Activated CD8-positive, alpha-beta T cell treated with anti-CD3 and anti-CD28 coated beads, Interleukin-2, amount 10 ng/mL, durations not matched to agents 7 days and 5 days (primary cell): ENCODE measurements at regions of chr6 and their contacts with region 1.

Region 1: GRCh38 chr6:63352587-63353285 is 33.0 kb upstream of the LGSN start:
- DNase-seq: peak; percentile 58
- ATAC-seq: peak; percentile 77
- H3K4me3 Mint-ChIP-seq: peak overlapping the region; percentile 50
- H3K27ac Mint-ChIP-seq: peak overlapping the region; percentile 77
- H3K4me1 Mint-ChIP-seq: peaks cover 24% of the 10 kb centered on the region
- H3K27me3 Mint-ChIP-seq: peaks cover 11% of the 10 kb centered on the region

Region 2: DNA sequence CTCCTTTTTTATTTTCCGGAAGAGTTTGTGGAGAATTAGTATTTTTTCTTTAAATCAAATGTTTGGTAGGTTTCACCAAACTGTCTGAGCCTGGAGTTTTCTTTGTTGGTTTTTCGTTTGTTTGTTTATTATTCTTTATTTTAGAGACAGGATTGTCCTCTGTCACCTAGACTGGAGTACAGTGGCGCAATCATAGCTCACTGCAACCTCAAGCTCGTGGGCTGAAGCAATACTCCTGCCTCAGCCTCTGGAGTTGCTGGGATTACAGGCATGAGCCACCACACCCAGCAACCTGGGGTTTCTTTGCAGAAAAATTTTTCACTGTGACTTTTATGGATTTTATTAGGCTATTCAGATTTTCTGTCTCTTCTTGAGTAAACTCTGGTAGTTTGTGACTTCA is 99.4 kb after region 1 on chr6:
- CTCF ChIA-PET with region 1: no interaction called
- POLR2A ChIA-PET with region 1: no interaction called
- DNase-seq: no peak
- ATAC-seq: no peak
- H3K4me3 Mint-ChIP-seq: no peak overlapping the region
- H3K27ac Mint-ChIP-seq: no peak overlapping the region
- H3K4me1 Mint-ChIP-seq: no peaks in the 10 kb centered on the region
- H3K27me3 Mint-ChIP-seq: peaks cover 4% of the 10 kb centered on the region

Region 3: DNA sequence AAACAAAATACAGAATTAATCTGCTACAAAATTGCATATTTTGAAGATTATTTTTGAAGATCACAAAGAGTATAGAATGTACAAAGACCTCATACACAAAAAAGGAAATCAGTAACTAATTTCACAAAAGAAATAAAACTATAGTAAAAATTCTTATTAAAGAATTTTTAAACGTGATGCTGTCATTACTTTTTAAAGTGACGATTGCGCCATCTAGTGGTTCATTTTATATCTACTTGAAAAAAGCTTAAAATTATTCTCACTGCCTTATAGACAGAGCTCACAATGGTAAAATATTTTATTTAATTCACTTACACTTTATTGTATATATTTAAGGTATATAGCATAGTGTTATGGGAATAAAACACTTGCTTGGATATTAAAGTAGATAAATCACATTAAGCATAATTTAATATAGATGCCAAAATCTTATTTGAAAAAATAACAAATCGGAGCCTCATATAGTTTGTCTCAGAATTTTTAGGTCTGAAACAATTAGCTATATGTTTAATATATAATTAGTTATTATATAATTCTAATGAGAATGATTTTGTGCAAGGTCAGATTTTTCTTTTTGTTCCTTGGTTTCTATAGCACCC is 411.7 kb after region 1 on chr6:
- CTCF ChIA-PET with region 1: interaction called, 22 read pairs
- POLR2A ChIA-PET with region 1: no interaction called
- DNase-seq: no peak
- ATAC-seq: no peak
- H3K4me3 Mint-ChIP-seq: no peak overlapping the region
- H3K27ac Mint-ChIP-seq: no peak overlapping the region
- H3K4me1 Mint-ChIP-seq: no peaks in the 10 kb centered on the region
- H3K27me3 Mint-ChIP-seq: peaks cover 22% of the 10 kb centered on the region

Region 4: GRCh38 chr6:63802606-63803206 is 450.0 kb after region 1 on chr6:
- CTCF ChIA-PET with region 1: interaction called, 17 read pairs
- POLR2A ChIA-PET with region 1: no interaction called
- DNase-seq: no peak
- ATAC-seq: no peak
- H3K4me3 Mint-ChIP-seq: no peak overlapping the region
- H3K27ac Mint-ChIP-seq: no peak overlapping the region
- H3K4me1 Mint-ChIP-seq: peaks cover 7% of the 10 kb centered on the region
- H3K27me3 Mint-ChIP-seq: no peaks in the 10 kb centered on the region